ENCODE measurements at regions of chr12 and their contacts with region 1.

Region 1: GRCh38 chr12:106136263-106136662 is 2.5 kb downstream of the NUAK1 start:
- DNase-seq: peak; percentile 88 to 93
- ATAC-seq: peak in 1 of 4 donors; percentile 28
- H3K4me3 ChIP-seq: peak overlapping the region; percentile 91
- H3K27ac ChIP-seq: peak overlapping the region; percentile 98
- H3K4me1 ChIP-seq: peaks cover 65% of the 10 kb centered on the region
- H3K27me3 ChIP-seq: no peaks in the 10 kb centered on the region
- CTCF ChIP-seq: peak; percentile 91

Region 2: DNA sequence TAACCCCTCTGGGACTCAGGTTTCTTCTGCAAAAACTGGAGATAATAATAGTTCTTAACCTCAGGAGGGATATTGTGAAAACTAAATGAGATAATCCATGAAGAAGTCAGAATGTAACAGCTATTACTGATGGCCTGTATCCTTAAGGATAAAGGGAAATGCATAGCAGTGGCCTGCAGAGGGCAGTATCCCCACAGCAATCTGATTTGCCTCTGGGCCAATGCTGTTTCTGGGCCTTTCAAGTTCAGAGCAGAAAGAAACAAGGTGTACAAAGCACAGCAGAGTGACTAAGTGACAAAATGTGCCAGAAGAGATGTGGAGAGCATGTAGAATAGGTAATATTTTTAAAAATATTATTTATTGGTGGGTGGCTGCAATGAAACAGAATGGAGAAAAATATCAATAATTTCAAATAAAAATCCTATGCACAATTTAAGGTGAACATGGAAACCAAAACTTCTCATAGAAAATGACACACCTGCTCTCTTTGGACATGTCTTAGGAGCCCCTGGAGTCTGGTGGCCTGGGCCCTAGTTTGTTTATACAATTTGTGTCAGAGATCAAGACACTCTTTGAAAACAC is 715.5 kb before region 1 on chr12:
- intact Hi-C with region 1: loop called (anchors 2 to 5 kb)
- DNase-seq: peak; percentile 70 to 84
- ATAC-seq: peak; percentile 89 to 96 (median 93)
- H3K4me3 ChIP-seq: no peak overlapping the region
- H3K27ac ChIP-seq: no peak overlapping the region
- H3K4me1 ChIP-seq: peaks cover 4% of the 10 kb centered on the region
- H3K27me3 ChIP-seq: no peaks in the 10 kb centered on the region
- CTCF ChIP-seq: peak; percentile 93

Region 3: GRCh38 chr12:105705765-105706164 is 430.5 kb before region 1 on chr12:
- intact Hi-C with region 1: loop called (anchors 5 kb)
- DNase-seq: peak in 1 of 2 donors; percentile 29
- ATAC-seq: peak; percentile 47 to 74 (median 60)
- H3K4me3 ChIP-seq: no peak overlapping the region
- H3K27ac ChIP-seq: peak overlapping the region; percentile 79
- H3K4me1 ChIP-seq: peaks cover 23% of the 10 kb centered on the region
- H3K27me3 ChIP-seq: no peaks in the 10 kb centered on the region
- CTCF ChIP-seq: peak; percentile 77

Region 4: GRCh38 chr12:105716621-105717020 is 419.6 kb before region 1 on chr12:
- intact Hi-C with region 1: no loop called
- DNase-seq: no peak
- ATAC-seq: no peak
- H3K4me3 ChIP-seq: no peak overlapping the region
- H3K27ac ChIP-seq: no peak overlapping the region
- H3K4me1 ChIP-seq: no peaks in the 10 kb centered on the region
- H3K27me3 ChIP-seq: no peaks in the 10 kb centered on the region
- CTCF ChIP-seq: no peak

Region 5: GRCh38 chr12:106039242-106039641 is 97.0 kb before region 1 on chr12:
- intact Hi-C with region 1: loop called in 1 of 2 experiments (anchors 5 kb)
- DNase-seq: peak; percentile 28 to 71
- ATAC-seq: peak; percentile 80 to 96 (median 94)
- H3K4me3 ChIP-seq: no peak overlapping the region
- H3K27ac ChIP-seq: no peak overlapping the region
- H3K4me1 ChIP-seq: peaks cover 4% of the 10 kb centered on the region
- H3K27me3 ChIP-seq: no peaks in the 10 kb centered on the region
- CTCF ChIP-seq: no peak

Region 6: GRCh38 chr12:106223485-106224354 is 87.5 kb after region 1 on chr12:
- intact Hi-C with region 1: loop called in 1 of 2 experiments (anchors 5 kb)
- DNase-seq: peak; percentile 67 to 85
- ATAC-seq: peak; percentile 84 to 86 (median 84)
- H3K4me3 ChIP-seq: no peak overlapping the region
- H3K27ac ChIP-seq: no peak overlapping the region
- H3K4me1 ChIP-seq: peaks cover 8% of the 10 kb centered on the region
- H3K27me3 ChIP-seq: no peaks in the 10 kb centered on the region
- CTCF ChIP-seq: peak; percentile 96

Measured in psoas muscle (tissue), 8 donors.